Gastrocnemius medialis (tissue), 4 donors: ENCODE measurements at regions of chr14 and their contacts with region 1.

Region 1: GRCh38 chr14:90697577-90698206 is 118.5 kb downstream of the TTC7B start:
- DNase-seq: peak; percentile 84 to 88
- ATAC-seq: peak; percentile 56 to 61
- H3K4me3 ChIP-seq: peak overlapping the region in 1 of 4 donors; percentile 0
- H3K27ac ChIP-seq: peak overlapping the region; percentile 87 to 93 (median 88)
- H3K4me1 ChIP-seq: peaks cover 69 to 71% of the 10 kb centered on the region in 2 donors
- H3K27me3 ChIP-seq: no peaks in the 10 kb centered on the region
- CTCF ChIP-seq: peak; percentile 96 to 98 (median 96)
- POLR2A ChIP-seq: no peak

Region 2: GRCh38 chr14:90383075-90383730 is 314.5 kb before region 1 on chr14:
- in situ Hi-C with region 1: no loop called
- intact Hi-C with region 1: loop called (anchors 1 kb)
- DNase-seq: peak; percentile 99 to 100
- ATAC-seq: peak; percentile 77 to 81
- H3K4me3 ChIP-seq: peak overlapping the region; percentile 69 to 80 (median 78)
- H3K27ac ChIP-seq: peak overlapping the region; percentile 97 to 99 (median 98)
- H3K4me1 ChIP-seq: peaks cover 29 to 40% of the 10 kb centered on the region in 2 donors
- H3K27me3 ChIP-seq: no peaks in the 10 kb centered on the region
- CTCF ChIP-seq: peak in 2 of 5 experiments; percentile 27 to 39
- POLR2A ChIP-seq: peak; percentile 94 to 98

Region 3: GRCh38 chr14:90580377-90581335 is 117.0 kb before region 1 on chr14:
- in situ Hi-C with region 1: no loop called
- intact Hi-C with region 1: loop called (anchors 2 kb)
- DNase-seq: no peak
- ATAC-seq: no peak
- H3K4me3 ChIP-seq: no peak overlapping the region
- H3K27ac ChIP-seq: peak overlapping the region; percentile 54 to 87 (median 76)
- H3K4me1 ChIP-seq: peaks cover 43 to 53% of the 10 kb centered on the region in 2 donors
- H3K27me3 ChIP-seq: no peaks in the 10 kb centered on the region
- CTCF ChIP-seq: no peak
- POLR2A ChIP-seq: no peak

Region 4: GRCh38 chr14:90624223-90624622 is 73.5 kb before region 1 on chr14:
- in situ Hi-C with region 1: no loop called
- intact Hi-C with region 1: loop called (anchors 1 kb)
- DNase-seq: peak; percentile 94 to 97
- ATAC-seq: peak; percentile 58 to 64
- H3K4me3 ChIP-seq: peak overlapping the region in 2 of 4 donors; percentile 9 to 28
- H3K27ac ChIP-seq: peak overlapping the region; percentile 89 to 96 (median 94)
- H3K4me1 ChIP-seq: peaks cover 51 to 68% of the 10 kb centered on the region in 2 donors
- H3K27me3 ChIP-seq: no peaks in the 10 kb centered on the region
- CTCF ChIP-seq: no peak
- POLR2A ChIP-seq: peak; percentile 47 to 48